ENCODE measurements at regions of chr10 and their contacts with region 1.

Region 1: DNA sequence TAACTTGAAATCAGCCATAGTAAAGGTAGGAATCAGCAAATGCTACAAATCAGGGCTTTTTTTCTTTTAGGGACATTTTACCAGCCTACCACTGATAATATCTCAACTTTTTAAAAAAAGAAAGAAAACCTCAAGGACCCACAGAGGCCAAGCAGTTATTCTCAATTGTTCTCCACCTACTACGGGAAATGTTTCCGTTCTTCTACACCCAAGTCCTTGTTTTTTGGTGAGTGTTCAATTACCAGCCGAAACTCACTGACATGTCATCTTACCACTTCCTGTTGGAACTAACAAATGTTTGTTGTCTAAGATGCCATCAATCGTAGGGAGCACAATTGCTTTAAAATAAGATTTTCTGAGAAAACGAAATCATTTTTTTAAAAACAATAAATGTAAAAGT is 50.2 kb upstream of the CDK1 start:
- DNase-seq: no peak
- ATAC-seq: peak; percentile 52
- H3K4me3 Mint-ChIP-seq: peak overlapping the region; percentile 76
- H3K27ac Mint-ChIP-seq: peak overlapping the region; percentile 97
- H3K4me1 Mint-ChIP-seq: peaks cover 76% of the 10 kb centered on the region
- H3K27me3 Mint-ChIP-seq: no peaks in the 10 kb centered on the region

Region 2: DNA sequence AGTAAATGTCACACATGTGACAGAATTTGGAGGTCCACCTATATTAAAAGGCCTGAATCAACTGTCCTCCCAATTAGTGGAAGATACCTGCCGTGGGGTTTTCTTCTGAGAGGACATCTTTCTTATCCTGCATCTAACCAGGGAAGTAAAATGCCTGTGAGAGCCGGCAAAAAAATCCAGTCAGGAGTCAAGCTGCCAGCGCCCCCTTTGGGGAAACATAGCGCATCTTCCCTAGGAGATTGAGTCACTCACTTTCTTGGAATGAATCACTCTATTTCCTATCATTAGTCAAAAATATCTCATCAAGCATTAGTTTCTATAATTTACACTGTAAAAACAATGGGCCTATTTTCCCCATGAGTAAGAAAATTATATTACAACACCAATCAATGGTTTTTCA is 272.0 kb before region 1 on chr10:
- CTCF ChIA-PET with region 1: no interaction called
- POLR2A ChIA-PET with region 1: no interaction called
- intact Hi-C with region 1: no loop called
- DNase-seq: no peak
- ATAC-seq: no peak
- H3K4me3 Mint-ChIP-seq: no peak overlapping the region
- H3K27ac Mint-ChIP-seq: no peak overlapping the region
- H3K4me1 Mint-ChIP-seq: peaks cover 35% of the 10 kb centered on the region
- H3K27me3 Mint-ChIP-seq: no peaks in the 10 kb centered on the region

Region 3: GRCh38 chr10:60717852-60718251 is 10.2 kb before region 1 on chr10:
- CTCF ChIA-PET with region 1: interaction called, 11 read pairs
- POLR2A ChIA-PET with region 1: no interaction called
- intact Hi-C with region 1: no loop called
- DNase-seq: no peak
- ATAC-seq: peak; percentile 76
- H3K4me3 Mint-ChIP-seq: no peak overlapping the region
- H3K27ac Mint-ChIP-seq: no peak overlapping the region
- H3K4me1 Mint-ChIP-seq: peaks cover 63% of the 10 kb centered on the region
- H3K27me3 Mint-ChIP-seq: no peaks in the 10 kb centered on the region

Region 4: GRCh38 chr10:60801522-60801921 is 73.5 kb after region 1 on chr10:
- CTCF ChIA-PET with region 1: no interaction called
- POLR2A ChIA-PET with region 1: no interaction called
- intact Hi-C with region 1: no loop called
- DNase-seq: no peak
- ATAC-seq: no peak
- H3K4me3 Mint-ChIP-seq: no peak overlapping the region
- H3K27ac Mint-ChIP-seq: no peak overlapping the region
- H3K4me1 Mint-ChIP-seq: no peaks in the 10 kb centered on the region
- H3K27me3 Mint-ChIP-seq: no peaks in the 10 kb centered on the region

Region 5: GRCh38 chr10:62231371-62231770 is 1503.3 kb after region 1 on chr10:
- CTCF ChIA-PET with region 1: no interaction called
- POLR2A ChIA-PET with region 1: no interaction called
- intact Hi-C with region 1: loop called in 1 of 2 experiments (anchors 10 kb)
- DNase-seq: no peak
- ATAC-seq: no peak
- H3K4me3 Mint-ChIP-seq: no peak overlapping the region
- H3K27ac Mint-ChIP-seq: peak overlapping the region; percentile 40
- H3K4me1 Mint-ChIP-seq: peaks cover 30% of the 10 kb centered on the region
- H3K27me3 Mint-ChIP-seq: no peaks in the 10 kb centered on the region

Measured in activated CD4-positive, alpha-beta T cell treated with anti-CD3 and anti-CD28 coated beads for 36 hours (primary cell).